Posterior vena cava (tissue), 2 donors: ENCODE measurements at regions of chr12 and their contacts with region 1.

Region 1: GRCh38 chr12:104998423-104999346 is 12.6 kb downstream of the NOPCHAP1 start:
- DNase-seq: no peak

Region 2: DNA sequence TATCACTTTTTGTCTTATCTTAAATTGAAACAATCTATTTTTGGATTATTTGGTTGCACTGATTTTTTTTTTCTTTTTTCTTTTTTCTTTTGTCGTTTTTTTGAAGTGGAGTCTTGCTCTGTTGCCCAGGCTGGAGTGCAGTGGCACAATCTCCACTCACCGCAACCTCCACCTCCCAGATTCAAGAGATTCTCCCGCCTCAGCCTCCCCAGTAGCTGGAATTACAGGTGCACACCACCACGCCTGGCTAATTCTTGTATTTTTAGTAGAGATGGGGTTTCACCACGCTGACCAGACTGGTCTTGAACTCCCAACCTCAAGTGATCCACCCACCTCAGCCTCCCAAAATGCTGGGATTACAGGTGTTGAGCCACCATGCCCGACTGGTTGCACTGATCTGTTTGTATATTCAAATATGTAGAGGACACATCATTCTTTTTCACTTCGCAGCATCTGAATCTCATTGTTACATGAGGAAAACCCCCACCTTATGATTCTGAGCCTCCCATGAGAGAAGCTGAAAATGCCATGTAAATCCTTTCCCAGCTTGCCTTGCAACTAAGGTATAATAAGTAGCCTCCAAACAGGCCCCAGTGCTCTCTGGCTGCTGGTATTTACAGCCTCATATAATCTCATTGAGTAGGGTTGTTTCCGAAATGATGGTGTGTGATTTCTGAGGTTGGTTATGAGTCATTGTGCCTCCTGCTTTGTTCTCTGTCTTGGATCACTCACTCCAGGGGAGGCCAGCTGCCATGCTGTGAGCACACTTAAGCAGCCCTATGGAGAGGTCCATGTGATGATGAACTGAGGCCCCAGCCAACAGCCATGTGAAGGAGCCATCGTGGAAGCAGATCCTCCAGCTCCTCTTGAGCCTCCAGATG is 1073.7 kb before region 1 on chr12:
- intact Hi-C with region 1: loop called in 1 of 2 experiments (anchors 5 kb)
- DNase-seq: no peak

Region 3: GRCh38 chr12:104669736-104670341 is 328.8 kb before region 1 on chr12:
- intact Hi-C with region 1: no loop called
- DNase-seq: no peak